CD4-positive, alpha-beta T cell (primary cell): ENCODE measurements at regions of chr15 and their contacts with region 1.

Region 1: DNA sequence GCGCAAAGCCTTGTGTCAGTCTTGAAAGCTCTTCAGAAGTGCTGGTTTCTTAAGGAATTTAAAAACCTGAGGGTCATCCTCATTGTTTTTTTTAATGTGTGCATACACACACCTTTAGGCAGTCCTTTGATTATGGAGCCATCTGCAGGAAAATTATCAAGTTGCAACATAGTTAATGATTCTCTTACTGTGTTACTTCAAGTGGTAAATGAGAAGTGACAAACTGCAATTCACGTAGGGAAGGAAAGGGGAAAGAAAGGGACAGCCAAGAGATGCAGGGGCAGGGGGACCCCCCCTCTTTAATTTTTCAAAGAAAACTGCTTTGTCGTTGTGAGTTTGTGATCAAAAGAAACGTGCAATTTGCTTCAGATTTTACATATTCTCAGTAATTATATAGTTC is 162.4 kb upstream of the CGNL1 start:
- DNase-seq: peak in 3 of 14 experiments; percentile 38 to 41 (median 40)
- ATAC-seq: no peak
- H3K4me3 ChIP-seq: no peak overlapping the region
- H3K4me3 Mint-ChIP-seq: no peak overlapping the region
- H3K27ac ChIP-seq: no peak overlapping the region
- H3K27ac Mint-ChIP-seq: no peak overlapping the region
- H3K4me1 ChIP-seq: no peaks in the 10 kb centered on the region
- H3K4me1 Mint-ChIP-seq: peaks cover 40% of the 10 kb centered on the region
- H3K27me3 ChIP-seq: no peaks in the 10 kb centered on the region
- H3K27me3 Mint-ChIP-seq: no peaks in the 10 kb centered on the region
- CTCF ChIP-seq: peak; percentile 49

Region 2: DNA sequence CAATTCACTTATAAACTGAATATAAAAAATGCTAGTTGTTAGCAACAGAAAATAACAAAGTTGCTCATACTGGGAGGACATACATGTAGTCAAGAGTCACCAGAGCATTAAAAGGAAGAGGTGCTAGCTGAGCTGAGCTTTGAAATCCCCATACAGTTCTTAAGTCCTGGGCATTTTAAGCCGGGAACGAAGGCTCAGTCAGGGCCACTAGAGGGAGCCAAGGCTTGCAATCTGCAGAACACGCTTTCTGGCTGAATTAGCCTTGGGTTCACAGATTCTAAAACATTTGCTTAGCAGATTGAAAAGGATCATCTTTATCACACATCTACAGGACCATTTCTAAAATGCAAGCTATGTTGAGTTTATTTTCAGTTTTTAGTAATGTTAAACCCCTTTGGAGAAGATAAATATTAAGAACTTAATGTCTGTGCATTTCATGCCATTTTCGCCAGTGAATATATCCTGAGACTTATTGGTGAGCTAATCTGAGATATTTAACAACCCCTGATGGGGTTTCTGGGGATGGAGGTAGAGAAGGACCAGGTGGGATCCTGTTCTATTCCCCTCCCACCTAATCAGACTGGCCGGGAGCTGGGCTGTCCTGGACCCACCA is 722.6 kb before region 1 on chr15:
- CTCF ChIA-PET with region 1: interaction called, 4 read pairs
- POLR2A ChIA-PET with region 1: no interaction called
- intact Hi-C with region 1: loop called (anchors 2 to 5 kb)
- DNase-seq: peak; percentile 10 to 71 (median 29)
- ATAC-seq: peak; percentile 48
- H3K4me3 ChIP-seq: no peak overlapping the region
- H3K4me3 Mint-ChIP-seq: no peak overlapping the region
- H3K27ac ChIP-seq: no peak overlapping the region
- H3K27ac Mint-ChIP-seq: no peak overlapping the region
- H3K4me1 ChIP-seq: no peaks in the 10 kb centered on the region
- H3K4me1 Mint-ChIP-seq: no peaks in the 10 kb centered on the region
- H3K27me3 ChIP-seq: peaks cover 0 to 3% of the 10 kb centered on the region in 2 experiments
- H3K27me3 Mint-ChIP-seq: no peaks in the 10 kb centered on the region
- CTCF ChIP-seq: peak; percentile 69

Region 3: GRCh38 chr15:56496635-56497034 is 717.2 kb before region 1 on chr15:
- CTCF ChIA-PET with region 1: interaction called, 4 read pairs
- POLR2A ChIA-PET with region 1: no interaction called
- intact Hi-C with region 1: loop called (anchors 2 to 5 kb)
- DNase-seq: peak in 3 of 14 experiments; percentile 44 to 65 (median 58)
- ATAC-seq: peak; percentile 49
- H3K4me3 ChIP-seq: no peak overlapping the region
- H3K4me3 Mint-ChIP-seq: no peak overlapping the region
- H3K27ac ChIP-seq: no peak overlapping the region
- H3K27ac Mint-ChIP-seq: no peak overlapping the region
- H3K4me1 ChIP-seq: no peaks in the 10 kb centered on the region
- H3K4me1 Mint-ChIP-seq: peaks cover 4% of the 10 kb centered on the region
- H3K27me3 ChIP-seq: peaks cover 0 to 4% of the 10 kb centered on the region in 2 experiments
- H3K27me3 Mint-ChIP-seq: peaks cover 15% of the 10 kb centered on the region
- CTCF ChIP-seq: peak; percentile 72

Region 4: DNA sequence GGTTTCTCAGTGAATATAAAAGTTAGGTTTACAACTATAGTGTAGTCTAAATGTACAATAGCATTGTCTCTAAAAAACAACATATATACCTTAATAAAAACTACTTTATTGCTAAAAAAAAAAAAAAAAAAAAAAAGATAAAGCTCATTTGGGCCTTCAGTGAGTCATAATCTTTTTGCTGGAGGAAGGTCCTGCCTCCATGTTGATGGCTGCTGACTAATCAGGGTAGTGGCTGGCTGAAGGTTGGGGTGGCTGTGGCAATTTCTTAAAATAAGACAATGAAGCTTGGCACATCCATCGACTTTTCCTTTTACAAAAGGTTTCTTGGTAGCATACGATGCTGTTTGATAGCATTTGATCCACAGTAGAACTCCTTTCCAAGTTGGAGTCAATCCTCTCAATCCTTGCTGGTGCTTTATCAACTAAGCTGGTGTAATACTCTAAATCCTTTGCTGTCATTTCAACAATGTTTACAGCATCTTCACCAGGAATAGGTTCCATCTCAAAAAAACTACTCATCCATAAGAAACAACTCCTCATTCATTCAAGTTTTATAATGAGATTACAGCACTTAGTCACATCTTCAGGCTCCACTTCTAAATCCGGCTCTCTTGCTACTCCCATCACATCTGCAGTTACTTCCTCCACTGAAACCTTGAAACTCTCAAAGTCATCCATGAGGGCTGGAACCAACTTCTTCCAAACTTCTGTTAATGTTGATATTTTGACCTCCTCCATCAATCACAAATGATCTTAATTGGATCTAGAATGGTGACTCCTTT is 493.9 kb before region 1 on chr15:
- CTCF ChIA-PET with region 1: no interaction called
- POLR2A ChIA-PET with region 1: no interaction called
- intact Hi-C with region 1: no loop called
- DNase-seq: no peak
- ATAC-seq: no peak
- H3K4me3 ChIP-seq: no peak overlapping the region
- H3K4me3 Mint-ChIP-seq: no peak overlapping the region
- H3K27ac ChIP-seq: no peak overlapping the region
- H3K27ac Mint-ChIP-seq: no peak overlapping the region
- H3K4me1 ChIP-seq: no peaks in the 10 kb centered on the region
- H3K4me1 Mint-ChIP-seq: peaks cover 74% of the 10 kb centered on the region
- H3K27me3 ChIP-seq: no peaks in the 10 kb centered on the region
- H3K27me3 Mint-ChIP-seq: no peaks in the 10 kb centered on the region
- CTCF ChIP-seq: no peak

Region 5: DNA sequence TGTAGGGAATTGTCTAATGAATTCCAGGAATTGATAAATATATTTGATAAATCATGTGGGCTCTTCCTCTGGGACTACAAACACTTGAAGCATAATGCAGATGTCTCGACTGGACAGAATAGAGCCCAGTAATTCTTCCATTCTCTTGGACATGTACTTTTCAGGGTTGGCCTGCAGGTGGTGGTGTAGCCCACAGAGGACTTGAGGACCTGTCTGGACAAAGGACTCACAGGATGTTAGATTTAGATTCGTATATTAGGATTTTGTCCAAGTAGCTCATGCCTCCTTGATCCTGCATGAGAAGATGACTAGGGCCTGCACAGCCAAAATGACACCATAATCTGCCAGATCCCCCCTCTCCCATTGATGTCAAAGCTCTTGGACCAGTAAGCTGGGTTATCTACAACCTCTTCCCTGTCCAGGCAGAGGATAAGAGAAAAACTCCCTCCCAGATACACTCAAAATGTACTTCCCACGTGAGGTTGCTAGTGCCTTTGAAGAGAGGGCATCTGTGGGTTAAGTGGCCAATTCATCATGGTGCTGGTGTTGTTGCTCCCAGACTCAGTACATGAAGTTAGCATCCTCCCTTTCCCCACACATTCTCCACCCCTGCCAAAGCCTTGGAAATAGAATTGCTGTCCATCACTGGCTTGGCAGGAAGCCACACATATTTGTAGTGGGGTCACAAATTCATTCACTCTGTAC is 392.0 kb before region 1 on chr15:
- CTCF ChIA-PET with region 1: no interaction called
- POLR2A ChIA-PET with region 1: no interaction called
- intact Hi-C with region 1: loop called in 1 of 2 experiments (anchors 2 kb)
- DNase-seq: peak; percentile 15 to 68 (median 38)
- ATAC-seq: no peak
- H3K4me3 ChIP-seq: no peak overlapping the region
- H3K4me3 Mint-ChIP-seq: no peak overlapping the region
- H3K27ac ChIP-seq: no peak overlapping the region
- H3K27ac Mint-ChIP-seq: no peak overlapping the region
- H3K4me1 ChIP-seq: no peaks in the 10 kb centered on the region
- H3K4me1 Mint-ChIP-seq: no peaks in the 10 kb centered on the region
- H3K27me3 ChIP-seq: no peaks in the 10 kb centered on the region
- H3K27me3 Mint-ChIP-seq: no peaks in the 10 kb centered on the region
- CTCF ChIP-seq: peak; percentile 47